Ascending aorta (tissue), 2 donors: ENCODE measurements at regions of chrX and their contacts with region 1.

Region 1: DNA sequence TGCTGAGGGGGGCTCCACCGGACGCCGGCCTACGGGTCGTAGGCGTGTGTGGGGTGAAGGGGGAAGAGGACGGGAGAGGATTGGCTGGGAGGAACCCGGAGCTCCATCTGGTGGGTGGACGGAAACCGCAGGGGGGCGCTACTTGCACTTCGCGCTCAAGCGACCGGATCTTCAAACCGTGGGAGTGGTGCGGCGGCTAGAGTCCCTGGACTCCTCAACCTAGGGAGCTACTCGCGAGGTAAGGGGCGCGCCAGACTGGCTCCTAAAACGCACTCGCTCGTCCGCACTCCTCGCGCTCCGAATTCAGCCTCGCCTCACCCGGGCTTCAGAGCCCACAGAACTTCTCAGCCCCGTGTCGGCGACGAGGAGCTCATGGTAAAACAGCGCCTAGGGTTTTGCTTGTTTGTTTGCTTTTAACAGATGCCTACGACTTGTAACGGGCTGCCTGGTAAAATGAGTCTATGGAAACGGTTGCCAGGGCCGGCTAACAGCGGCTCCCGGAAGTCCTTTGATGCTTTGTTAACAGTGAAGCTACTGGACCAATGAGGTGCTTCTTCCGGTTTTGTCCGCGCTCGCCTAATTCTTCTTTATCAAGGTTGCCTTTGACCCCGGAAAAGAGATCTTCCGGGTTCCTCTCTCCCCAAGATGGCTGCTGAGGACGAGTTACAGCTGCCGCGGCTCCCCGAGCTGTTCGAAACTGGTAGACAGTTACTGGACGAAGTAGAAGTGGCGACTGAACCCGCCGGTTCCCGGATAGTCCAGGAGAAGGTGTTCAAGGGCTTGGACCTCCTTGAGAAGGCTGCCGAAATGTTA is at the start of gene IGBP1:
- DNase-seq: peak; percentile 22 to 88
- H3K4me3 ChIP-seq: peak within 1 kb of the TSS; percentile 58 to 90
- H3K27ac ChIP-seq: peak within 1 kb of the TSS; percentile 69 to 89
- H3K4me1 ChIP-seq: no peaks in the 10 kb centered on the region
- H3K27me3 ChIP-seq: no peaks in the 10 kb centered on the region
- CTCF ChIP-seq: peak; percentile 38 to 55 (median 54)
- total RNA-seq, gene IGBP1: 20.1 TPM

Region 2: DNA sequence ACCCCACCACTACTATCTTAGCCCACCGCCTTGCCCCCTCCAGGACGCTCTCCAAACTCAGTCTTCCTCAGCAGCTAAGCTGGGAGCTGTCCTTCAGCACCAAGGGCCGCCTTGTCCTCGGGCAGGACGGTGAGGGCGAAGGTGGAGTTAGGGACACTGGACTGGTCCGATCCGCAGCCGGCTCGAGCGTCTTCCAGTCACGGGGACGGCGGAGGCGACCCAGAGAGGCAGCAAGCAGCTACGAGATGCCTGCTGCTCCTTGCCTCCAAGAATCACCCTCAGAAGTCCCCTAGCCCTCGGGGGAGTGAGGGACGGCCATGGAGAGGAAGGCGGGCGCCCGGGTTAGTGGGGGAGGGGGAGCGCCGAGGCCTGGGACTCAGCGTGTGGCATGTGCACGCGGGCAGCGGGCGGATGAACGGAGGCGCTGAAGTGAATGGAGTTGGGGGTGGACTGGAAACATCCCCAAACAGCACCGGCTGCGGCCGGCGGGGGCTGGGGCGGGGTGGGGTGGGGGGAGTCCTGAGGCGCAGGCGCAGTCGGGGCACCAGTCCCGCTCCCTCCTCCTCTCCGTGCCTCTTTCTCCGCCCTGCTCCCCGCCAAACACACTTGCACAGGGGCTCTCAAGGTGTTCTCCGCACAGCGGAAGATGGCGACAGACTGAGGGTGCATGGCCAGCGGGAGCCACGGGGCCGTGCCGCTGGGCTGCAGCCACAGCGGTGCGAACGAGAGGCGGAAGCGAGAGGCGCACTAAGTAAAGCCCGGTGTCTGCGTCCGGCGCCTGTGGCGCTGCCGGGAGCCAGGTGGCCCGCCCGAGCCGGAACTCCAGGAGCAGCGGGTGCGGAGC is 629.5 kb before region 1 on chrX and contains the start of gene NALF2:
- intact Hi-C with region 1: no loop called
- DNase-seq: no peak
- H3K4me3 ChIP-seq: peak within 1 kb of the TSS; percentile 51 to 66
- H3K27ac ChIP-seq: no peak within 1 kb of the TSS
- H3K4me1 ChIP-seq: no peaks in the 10 kb centered on the region
- H3K27me3 ChIP-seq: no peaks in the 10 kb centered on the region
- CTCF ChIP-seq: no peak
- total RNA-seq, gene NALF2: 0.43 TPM

Region 3: GRCh38 chrX:69615779-69616456 is 517.6 kb before region 1 on chrX and contains the start of gene EDA:
- intact Hi-C with region 1: loop called (anchors 2 kb)
- DNase-seq: peak; percentile 27 to 89
- H3K4me3 ChIP-seq: peak within 1 kb of the TSS; percentile 55 to 89
- H3K27ac ChIP-seq: peak within 1 kb of the TSS in 1 of 2 donors; percentile 21
- H3K4me1 ChIP-seq: no peaks in the 10 kb centered on the region
- H3K27me3 ChIP-seq: no peaks in the 10 kb centered on the region
- CTCF ChIP-seq: no peak
- total RNA-seq, gene EDA: 1.7 TPM

Region 4: GRCh38 chrX:70289793-70290776 is 156.6 kb after region 1 on chrX and contains the starts of genes KIF4A and PDZD11:
- intact Hi-C with region 1: loop called (anchors 10 kb)
- DNase-seq: peak; percentile 24 to 86
- H3K4me3 ChIP-seq: peak within 1 kb of the TSS; percentile 51 to 68
- H3K27ac ChIP-seq: peak within 1 kb of the TSS; percentile 66 to 77
- H3K4me1 ChIP-seq: peaks cover 4 to 5% of the 10 kb centered on the region in 2 donors
- H3K27me3 ChIP-seq: no peaks in the 10 kb centered on the region
- CTCF ChIP-seq: no peak
- total RNA-seq, gene KIF4A: not detected
- total RNA-seq, gene PDZD11: 17.8 TPM